ENCODE measurements at regions of chr2 and their contacts with region 1.

Region 1: GRCh38 chr2:238369591-238370040 is 49.3 kb downstream of the TRAF3IP1 start:
- DNase-seq: no peak
- H3K4me3 ChIP-seq: no peak overlapping the region
- H3K27ac ChIP-seq: peak overlapping the region in 3 of 4 donors; percentile 4 to 35 (median 32)
- H3K4me1 ChIP-seq: peaks cover 0 to 14% (median 0%) of the 10 kb centered on the region in 3 donors
- H3K27me3 ChIP-seq: no peaks in the 10 kb centered on the region
- CTCF ChIP-seq: no peak
- POLR2A ChIP-seq: no peak

Region 2: DNA sequence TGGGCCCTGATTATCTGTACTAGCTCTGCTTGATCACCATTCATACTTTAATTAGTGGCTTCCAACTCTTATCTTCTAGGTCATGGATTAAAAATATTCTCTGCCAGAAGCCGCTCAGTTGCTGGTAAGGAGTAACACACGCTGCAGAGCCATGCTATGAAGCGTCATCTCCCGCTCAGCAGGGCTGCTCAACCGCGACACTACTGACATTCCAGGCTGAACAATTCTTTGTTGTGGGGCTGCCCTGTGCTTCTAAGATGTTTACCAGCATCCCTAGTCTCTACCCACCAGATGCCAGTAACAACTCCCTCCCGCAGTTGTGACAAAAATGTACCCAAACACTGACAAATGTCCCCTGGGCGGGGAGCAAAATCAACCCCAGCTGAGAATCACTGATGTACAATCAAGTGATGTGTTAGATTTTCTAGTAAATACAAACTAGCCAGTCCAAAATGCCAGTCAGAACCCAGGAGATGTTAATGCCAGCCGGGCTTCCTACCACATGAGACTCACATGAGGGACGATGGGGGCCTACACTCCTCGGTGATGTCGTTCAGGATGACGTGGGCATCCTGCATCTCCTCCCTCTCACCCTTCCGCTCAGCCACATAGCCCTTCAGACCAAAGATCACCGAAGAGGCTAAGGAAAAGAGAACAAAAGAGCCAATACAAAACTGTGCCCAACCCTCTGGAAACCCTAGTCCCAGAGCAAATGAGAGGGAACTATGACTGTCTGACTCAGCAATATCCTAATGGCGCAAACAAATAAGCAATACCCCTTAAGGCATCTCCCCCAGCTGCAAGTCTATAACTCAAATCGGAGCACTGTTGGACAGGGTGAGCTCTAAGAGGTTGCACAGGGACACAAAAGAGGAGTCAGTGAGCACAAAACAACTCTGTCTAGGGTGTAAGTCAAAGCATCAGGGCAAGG is 181.7 kb before region 1 on chr2:
- intact Hi-C with region 1: no loop called
- DNase-seq: no peak
- H3K4me3 ChIP-seq: no peak overlapping the region
- H3K27ac ChIP-seq: no peak overlapping the region
- H3K4me1 ChIP-seq: no peaks in the 10 kb centered on the region
- H3K27me3 ChIP-seq: no peaks in the 10 kb centered on the region
- CTCF ChIP-seq: no peak
- POLR2A ChIP-seq: no peak

Region 3: DNA sequence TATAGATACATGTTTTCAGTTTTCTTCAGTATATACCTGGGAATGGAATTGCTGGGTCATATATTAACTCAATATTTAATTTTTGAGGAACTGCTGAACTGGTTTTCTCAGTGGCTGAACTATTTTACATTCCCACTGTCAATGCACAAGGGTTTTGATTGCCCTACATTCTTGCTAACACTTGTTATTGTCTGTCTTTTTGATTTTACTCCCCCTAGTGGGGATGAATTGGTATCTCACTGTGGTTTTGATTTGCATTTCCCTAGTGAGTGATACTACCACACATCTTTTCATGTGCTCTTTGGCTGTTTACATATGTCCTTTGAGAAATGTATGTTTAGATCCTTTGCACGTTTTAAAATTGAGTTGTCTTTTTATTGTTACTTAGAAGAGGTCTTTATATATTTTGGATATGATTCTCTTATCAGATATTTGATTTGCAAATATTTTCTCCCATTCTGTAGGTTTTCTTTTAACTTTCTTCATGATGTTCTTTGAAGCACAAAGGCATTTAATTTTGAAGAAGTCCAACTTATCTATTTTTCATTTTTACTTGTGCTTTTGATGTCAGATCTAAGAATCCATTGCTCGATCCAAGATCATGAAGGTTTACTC is 93.3 kb after region 1 on chr2:
- intact Hi-C with region 1: loop called (anchors 5 kb)
- DNase-seq: no peak
- H3K4me3 ChIP-seq: no peak overlapping the region
- H3K27ac ChIP-seq: no peak overlapping the region
- H3K4me1 ChIP-seq: peaks cover 0 to 18% (median 11%) of the 10 kb centered on the region in 3 donors
- H3K27me3 ChIP-seq: no peaks in the 10 kb centered on the region
- CTCF ChIP-seq: peak; percentile 57 to 85 (median 67)
- POLR2A ChIP-seq: no peak

Region 4: GRCh38 chr2:238784671-238785527 is 415.3 kb after region 1 on chr2:
- intact Hi-C with region 1: loop called (anchors 10 kb)
- DNase-seq: no peak
- H3K4me3 ChIP-seq: no peak overlapping the region
- H3K27ac ChIP-seq: peak overlapping the region in 3 of 4 donors; percentile 38 to 78 (median 71)
- H3K4me1 ChIP-seq: peaks cover 0 to 5% (median 3%) of the 10 kb centered on the region in 3 donors
- H3K27me3 ChIP-seq: no peaks in the 10 kb centered on the region
- CTCF ChIP-seq: peak; percentile 73 to 90 (median 80)
- POLR2A ChIP-seq: no peak

Measured in esophagus squamous epithelium (tissue), 5 donors.